Sciatic nerve (tissue), 2 donors: ENCODE measurements at regions of chr10 and their contacts with region 1.

Region 1: DNA sequence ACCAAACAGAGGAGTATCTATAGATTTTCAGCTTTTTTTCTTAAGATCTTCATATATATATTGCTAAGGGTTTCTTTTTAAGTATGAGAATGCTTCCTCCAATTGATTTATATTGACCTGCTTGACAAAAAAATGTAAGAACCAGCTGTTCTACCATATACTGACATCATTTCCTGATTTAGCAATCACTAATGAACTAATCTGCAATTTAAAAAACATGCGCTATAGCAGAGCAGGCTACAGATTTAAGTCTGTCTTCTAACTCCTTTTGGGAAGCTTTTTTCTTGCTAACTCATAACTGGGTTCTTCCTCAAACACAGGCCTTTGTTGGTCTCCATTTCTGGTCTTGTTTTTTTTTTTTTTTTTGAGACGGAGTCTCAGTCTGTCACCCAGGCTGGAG is 33.2 kb downstream of the ABCC2 start:
- DNase-seq: no peak
- ATAC-seq: no peak

Region 2: GRCh38 chr10:99711129-99711719 is 104.4 kb before region 1 on chr10:
- intact Hi-C with region 1: no loop called
- DNase-seq: no peak
- ATAC-seq: peak; percentile 77

Region 3: DNA sequence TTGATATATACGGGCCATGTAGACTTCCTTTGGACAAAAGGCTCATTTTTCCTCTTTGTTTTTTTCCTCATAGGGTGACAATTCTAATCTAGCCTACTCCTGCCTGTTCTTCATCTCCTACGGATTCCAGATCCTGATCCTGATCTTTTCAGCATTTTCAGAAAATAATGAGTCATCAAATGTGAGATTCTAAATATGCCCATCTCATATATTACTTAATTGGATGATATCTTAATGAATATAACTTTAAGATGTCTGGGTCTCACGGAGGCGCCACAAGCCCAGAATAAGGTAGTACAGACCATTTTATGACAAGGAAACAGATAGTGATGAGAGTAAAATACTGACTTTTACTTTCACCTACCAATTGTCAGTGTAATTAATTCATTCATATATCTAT is 21.8 kb before region 1 on chr10:
- intact Hi-C with region 1: loop called (anchors 1 kb)
- DNase-seq: no peak
- ATAC-seq: no peak

Region 4: GRCh38 chr10:99834410-99834809 is 18.8 kb after region 1 on chr10:
- intact Hi-C with region 1: no loop called
- DNase-seq: no peak
- ATAC-seq: no peak

Region 5: GRCh38 chr10:100600218-100600617 is 784.6 kb after region 1 on chr10:
- intact Hi-C with region 1: no loop called
- DNase-seq: no peak
- ATAC-seq: no peak